CD14-positive monocyte (primary cell): ENCODE measurements at regions of chr18 and their contacts with region 1.

Region 1: DNA sequence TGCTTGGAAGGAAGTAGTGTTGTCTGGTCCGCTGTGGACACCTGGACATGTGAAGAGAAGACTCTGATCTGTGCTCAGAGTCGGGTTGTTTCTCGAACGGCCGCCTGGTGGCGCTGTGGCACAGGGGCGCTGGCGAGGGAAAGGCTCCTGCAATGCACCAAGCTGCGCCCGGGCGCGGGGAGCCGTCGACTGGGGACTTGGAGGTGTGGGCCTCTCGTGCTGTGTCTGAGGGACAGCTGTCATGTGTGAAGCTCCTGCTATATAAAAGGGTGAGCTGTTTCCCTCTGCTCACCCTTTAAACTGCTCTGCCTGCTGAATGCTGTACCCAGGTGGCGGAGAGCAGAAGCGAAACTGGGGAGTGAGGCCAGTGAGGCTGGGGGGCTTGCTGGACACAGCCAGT is 44.0 kb downstream of the GNAL start:
- DNase-seq: peak; percentile 53 to 63 (median 57)
- H3K4me3 ChIP-seq: peak overlapping the region in 2 of 3 experiments; percentile 21 to 63
- H3K4me3 Mint-ChIP-seq: peak overlapping the region; percentile 64 to 80
- H3K27ac ChIP-seq: no peak overlapping the region
- H3K27ac Mint-ChIP-seq: no peak overlapping the region
- H3K4me1 ChIP-seq: peaks cover 4% of the 10 kb centered on the region in 2 donors
- H3K4me1 Mint-ChIP-seq: peaks cover 4% of the 10 kb centered on the region
- H3K27me3 ChIP-seq: peaks cover 2 to 4% of the 10 kb centered on the region in 2 donors
- H3K27me3 Mint-ChIP-seq: peaks cover 28 to 36% (median 33%) of the 10 kb centered on the region in 3 donors
- CTCF ChIP-seq: peak; percentile 97

Region 2: GRCh38 chr18:11398625-11399024 is 334.4 kb before region 1 on chr18:
- intact Hi-C with region 1: no loop called
- DNase-seq: no peak
- H3K4me3 ChIP-seq: no peak overlapping the region
- H3K4me3 Mint-ChIP-seq: no peak overlapping the region
- H3K27ac ChIP-seq: no peak overlapping the region
- H3K27ac Mint-ChIP-seq: no peak overlapping the region
- H3K4me1 ChIP-seq: no peaks in the 10 kb centered on the region
- H3K4me1 Mint-ChIP-seq: no peaks in the 10 kb centered on the region
- H3K27me3 ChIP-seq: no peaks in the 10 kb centered on the region
- H3K27me3 Mint-ChIP-seq: peaks cover 0 to 3% (median 0%) of the 10 kb centered on the region in 3 donors
- CTCF ChIP-seq: no peak

Region 3: GRCh38 chr18:11688989-11689668 is 43.9 kb before region 1 on chr18 and contains the start of gene GNAL:
- intact Hi-C with region 1: no loop called
- DNase-seq: peak; percentile 1 to 44 (median 25)
- H3K4me3 ChIP-seq: peak within 1 kb of the TSS in 1 of 3 experiments; percentile 47
- H3K4me3 Mint-ChIP-seq: peak within 1 kb of the TSS; percentile 53 to 84
- H3K27ac ChIP-seq: no peak within 1 kb of the TSS
- H3K27ac Mint-ChIP-seq: no peak within 1 kb of the TSS
- H3K4me1 ChIP-seq: peaks cover 2 to 13% of the 10 kb centered on the region in 2 donors
- H3K4me1 Mint-ChIP-seq: peaks cover 7% of the 10 kb centered on the region
- H3K27me3 ChIP-seq: peaks cover 43 to 63% of the 10 kb centered on the region in 2 donors
- H3K27me3 Mint-ChIP-seq: peaks cover 40 to 69% (median 49%) of the 10 kb centered on the region in 3 donors
- CTCF ChIP-seq: no peak
- polyA plus RNA-seq, gene GNAL: 0.01 to 0.03 TPM in 2 of 3 donors, not detected in the other

Region 4: GRCh38 chr18:11859903-11860407 is 126.9 kb after region 1 on chr18:
- intact Hi-C with region 1: loop called in 1 of 2 experiments (anchors 10 kb)
- DNase-seq: peak in 2 of 3 donors; percentile 41 to 67
- H3K4me3 ChIP-seq: no peak overlapping the region
- H3K4me3 Mint-ChIP-seq: peak overlapping the region in 1 of 2 donors; percentile 39
- H3K27ac ChIP-seq: no peak overlapping the region
- H3K27ac Mint-ChIP-seq: peak overlapping the region in 3 of 7 donors; percentile 22 to 60 (median 58)
- H3K4me1 ChIP-seq: peaks cover 32 to 45% of the 10 kb centered on the region in 2 donors
- H3K4me1 Mint-ChIP-seq: peaks cover 38% of the 10 kb centered on the region
- H3K27me3 ChIP-seq: no peaks in the 10 kb centered on the region
- H3K27me3 Mint-ChIP-seq: peaks cover 4 to 10% (median 6%) of the 10 kb centered on the region in 3 donors
- CTCF ChIP-seq: no peak

Region 5: DNA sequence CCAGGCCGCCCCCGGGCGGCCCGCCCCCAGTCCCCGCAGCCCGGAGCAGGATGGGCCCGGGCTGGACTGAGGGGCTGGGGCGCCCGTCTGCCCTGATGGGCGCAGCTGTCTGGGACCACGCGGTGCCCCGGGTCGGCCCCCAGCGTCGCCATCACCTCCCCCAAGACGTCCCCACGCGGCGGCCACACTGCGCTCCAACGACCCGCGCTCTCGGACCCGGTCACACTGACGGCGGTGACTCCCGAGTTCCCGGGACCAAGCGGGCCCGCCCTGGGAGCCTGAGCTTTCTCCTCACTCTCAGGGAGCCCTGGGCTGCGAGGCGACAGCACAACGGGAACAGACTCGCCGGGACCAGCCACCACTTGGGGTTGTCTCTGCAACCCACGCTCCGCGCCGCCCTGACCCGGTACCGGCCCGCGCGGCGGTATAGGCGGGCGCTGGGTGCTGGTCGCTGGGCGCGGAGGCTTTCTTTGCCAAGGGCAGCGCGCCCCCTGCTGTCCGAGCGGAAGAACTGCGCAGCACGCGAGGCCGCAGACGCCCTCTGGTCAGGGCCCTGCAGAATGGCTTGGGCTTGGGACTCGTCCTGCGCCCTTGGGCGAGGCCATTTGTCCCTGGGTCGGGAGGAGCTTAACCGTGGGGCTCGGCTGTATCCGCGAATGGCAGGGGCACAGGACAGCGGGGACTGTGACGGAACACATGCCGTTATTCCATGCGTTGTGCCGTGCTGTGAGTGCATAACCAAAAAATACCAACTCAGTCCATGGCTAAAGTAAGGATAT is 305.8 kb after region 1 on chr18:
- intact Hi-C with region 1: loop called (anchors 2 to 5 kb)
- DNase-seq: peak; percentile 71 to 79 (median 72)
- H3K4me3 ChIP-seq: peak overlapping the region; percentile 38 to 80 (median 49)
- H3K4me3 Mint-ChIP-seq: peak overlapping the region; percentile 75 to 85
- H3K27ac ChIP-seq: no peak overlapping the region
- H3K27ac Mint-ChIP-seq: peak overlapping the region in 1 of 7 donors; percentile 25
- H3K4me1 ChIP-seq: peaks cover 22 to 24% of the 10 kb centered on the region in 2 donors
- H3K4me1 Mint-ChIP-seq: peaks cover 22% of the 10 kb centered on the region
- H3K27me3 ChIP-seq: peaks cover 0 to 6% of the 10 kb centered on the region in 2 donors
- H3K27me3 Mint-ChIP-seq: peaks cover 5 to 18% (median 13%) of the 10 kb centered on the region in 3 donors
- CTCF ChIP-seq: peak; percentile 98

Region 6: GRCh38 chr18:12236934-12237832 is 504.2 kb after region 1 on chr18:
- intact Hi-C with region 1: loop called (anchors 5 to 10 kb)
- DNase-seq: peak; percentile 33 to 49 (median 40)
- H3K4me3 ChIP-seq: no peak overlapping the region
- H3K4me3 Mint-ChIP-seq: no peak overlapping the region
- H3K27ac ChIP-seq: no peak overlapping the region
- H3K27ac Mint-ChIP-seq: peak overlapping the region in 1 of 7 donors; percentile 57
- H3K4me1 ChIP-seq: no peaks in the 10 kb centered on the region
- H3K4me1 Mint-ChIP-seq: peaks cover 3% of the 10 kb centered on the region
- H3K27me3 ChIP-seq: no peaks in the 10 kb centered on the region
- H3K27me3 Mint-ChIP-seq: peaks cover 3 to 19% (median 16%) of the 10 kb centered on the region in 3 donors
- CTCF ChIP-seq: peak; percentile 92